CD8-positive, alpha-beta memory T cell (primary cell): ENCODE measurements at regions of chr3 and their contacts with region 1.

Region 1: GRCh38 chr3:38164966-38165680 is at the start of gene OXSR1:
- DNase-seq: peak; percentile 93 to 99 (median 98)
- H3K4me3 ChIP-seq: peak within 1 kb of the TSS; percentile 94
- H3K4me3 Mint-ChIP-seq: peak within 1 kb of the TSS; percentile 90 to 98 (median 96)
- H3K27ac ChIP-seq: peak within 1 kb of the TSS; percentile 100
- H3K27ac Mint-ChIP-seq: peak within 1 kb of the TSS; percentile 95 to 100 (median 100)
- H3K4me1 ChIP-seq: peaks cover 39% of the 10 kb centered on the region
- H3K4me1 Mint-ChIP-seq: peaks cover 42 to 55% (median 46%) of the 10 kb centered on the region in 3 donors
- H3K27me3 ChIP-seq: no peaks in the 10 kb centered on the region
- H3K27me3 Mint-ChIP-seq: no peaks in the 10 kb centered on the region
- total RNA-seq, gene OXSR1: 56.3 to 60.0 TPM

Region 2: GRCh38 chr3:37996785-37997301 is 168.3 kb before region 1 on chr3:
- CTCF ChIA-PET with region 1: interaction called, 10 read pairs
- POLR2A ChIA-PET with region 1: interaction called, 5 read pairs
- DNase-seq: peak; percentile 66 to 86 (median 75)
- H3K4me3 ChIP-seq: no peak overlapping the region
- H3K4me3 Mint-ChIP-seq: peak overlapping the region; percentile 30 to 79 (median 50)
- H3K27ac ChIP-seq: no peak overlapping the region
- H3K27ac Mint-ChIP-seq: peak overlapping the region; percentile 61 to 98 (median 94)
- H3K4me1 ChIP-seq: peaks cover 54% of the 10 kb centered on the region
- H3K4me1 Mint-ChIP-seq: peaks cover 54 to 70% (median 64%) of the 10 kb centered on the region in 3 donors
- H3K27me3 ChIP-seq: no peaks in the 10 kb centered on the region
- H3K27me3 Mint-ChIP-seq: peaks cover 0 to 1% of the 10 kb centered on the region in 2 donors

Region 3: DNA sequence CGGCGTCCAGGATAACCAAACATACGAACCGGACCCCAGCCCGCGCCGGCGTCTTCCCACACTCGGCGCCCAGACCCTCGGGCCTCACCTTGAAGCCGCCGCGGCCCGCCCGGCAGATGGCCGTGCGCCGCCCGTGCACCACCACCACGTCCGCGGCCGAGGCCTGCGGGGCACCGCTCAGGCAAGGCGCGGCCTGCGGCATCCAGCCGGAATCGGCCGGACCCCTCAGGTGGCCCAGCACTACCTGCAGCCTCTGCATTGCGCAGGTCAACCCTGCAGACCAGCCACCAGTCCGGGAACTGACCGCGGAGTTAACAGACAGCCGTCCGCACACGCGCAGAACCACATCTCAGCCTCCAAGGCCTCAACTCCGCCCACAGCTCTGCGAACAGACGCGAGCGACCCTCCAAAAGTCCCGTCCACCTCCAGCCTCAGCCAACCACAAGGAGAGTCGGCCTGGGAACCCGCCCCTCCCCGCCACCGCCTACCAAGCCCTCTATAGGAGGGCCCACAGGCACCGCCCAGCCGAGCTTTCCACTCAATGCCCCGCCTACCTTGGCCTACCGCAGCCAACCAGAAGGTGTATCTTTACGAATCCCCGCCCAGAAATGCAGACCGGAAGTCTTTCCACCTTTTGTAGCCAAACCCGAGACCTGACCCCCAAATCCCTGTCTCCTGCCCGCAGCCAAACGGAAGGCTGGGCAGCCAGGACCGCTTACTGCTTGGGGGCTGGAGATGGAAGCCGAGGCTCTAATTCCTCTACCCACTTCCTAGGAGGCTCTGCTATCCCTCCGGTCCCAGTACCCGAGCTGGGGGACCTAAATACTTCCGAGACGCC is 28.1 kb before region 1 on chr3 and contains the start of gene ACAA1:
- CTCF ChIA-PET with region 1: interaction called, 60 read pairs
- POLR2A ChIA-PET with region 1: interaction called, 75 read pairs
- DNase-seq: peak; percentile 95 to 98 (median 96)
- H3K4me3 ChIP-seq: peak within 1 kb of the TSS; percentile 97
- H3K4me3 Mint-ChIP-seq: peak within 1 kb of the TSS; percentile 87 to 99 (median 95)
- H3K27ac ChIP-seq: peak within 1 kb of the TSS; percentile 89
- H3K27ac Mint-ChIP-seq: peak within 1 kb of the TSS; percentile 89 to 100 (median 96)
- H3K4me1 ChIP-seq: peaks cover 37% of the 10 kb centered on the region
- H3K4me1 Mint-ChIP-seq: peaks cover 66 to 85% (median 84%) of the 10 kb centered on the region in 3 donors
- H3K27me3 ChIP-seq: no peaks in the 10 kb centered on the region
- H3K27me3 Mint-ChIP-seq: no peaks in the 10 kb centered on the region
- total RNA-seq, gene ACAA1: 67.1 to 67.4 TPM